ENCODE measurements at regions of chr3 and their contacts with region 1.

Region 1: GRCh38 chr3:150408221-150409102 is at the start of gene TSC22D2:
- DNase-seq: peak; percentile 99
- ATAC-seq: peak; percentile 71
- H3K4me3 Mint-ChIP-seq: peak within 1 kb of the TSS; percentile 94
- H3K27ac Mint-ChIP-seq: peak within 1 kb of the TSS; percentile 99
- H3K4me1 Mint-ChIP-seq: peaks cover 34% of the 10 kb centered on the region
- H3K27me3 Mint-ChIP-seq: no peaks in the 10 kb centered on the region
- CTCF ChIP-seq: no peak
- total RNA-seq, gene TSC22D2: 35.9 and 38.9 TPM in 2 replicates

Region 2: DNA sequence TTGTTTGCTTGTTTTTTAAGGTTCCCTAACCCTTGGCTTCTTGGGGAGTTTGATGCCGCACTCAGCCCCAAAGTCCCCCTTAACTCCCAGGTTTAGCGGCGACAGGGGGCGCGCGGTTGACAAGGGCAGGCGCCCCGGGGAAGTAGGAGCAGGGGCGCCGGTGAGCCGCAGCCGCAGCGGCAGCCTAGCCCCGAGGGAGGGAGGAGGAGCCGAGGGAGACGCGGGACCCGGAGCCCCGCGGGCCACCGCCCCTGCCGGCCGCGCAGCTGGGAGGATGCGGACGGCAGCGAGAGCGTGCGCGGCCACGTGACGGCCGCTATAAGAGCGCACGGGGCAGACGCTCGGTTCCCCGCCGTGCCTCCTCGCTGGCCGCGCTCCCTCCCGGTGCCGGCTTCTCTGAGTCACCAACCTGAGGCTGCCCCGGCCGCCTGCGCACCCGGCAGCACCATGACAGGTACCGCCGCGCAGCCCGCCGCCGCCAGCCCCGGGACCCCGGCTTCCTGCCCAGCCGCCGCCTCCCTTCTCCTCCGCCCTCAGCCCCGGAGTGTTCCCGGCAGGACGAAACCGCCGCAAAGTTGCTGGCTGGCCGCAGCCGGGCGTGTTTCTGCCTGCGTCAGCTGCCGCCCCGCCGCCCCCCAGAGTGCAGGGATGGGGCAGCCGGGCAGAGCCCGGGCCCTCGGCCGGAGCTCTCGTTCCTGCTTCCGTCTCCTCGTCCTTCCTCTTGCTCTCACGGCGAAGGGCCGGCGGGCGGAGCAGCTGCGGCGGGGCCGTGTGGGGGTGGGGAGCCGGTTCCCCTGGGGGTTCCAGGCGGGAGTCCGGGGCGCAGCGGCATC is 1417.1 kb before region 1 on chr3 and contains the start of gene GYG1:
- CTCF ChIA-PET with region 1: no interaction called
- POLR2A ChIA-PET with region 1: interaction called, 3 read pairs
- intact Hi-C with region 1: loop called (anchors 5 kb)
- DNase-seq: peak; percentile 72
- ATAC-seq: peak; percentile 91
- H3K4me3 Mint-ChIP-seq: peak within 1 kb of the TSS; percentile 84
- H3K27ac Mint-ChIP-seq: peak within 1 kb of the TSS; percentile 69
- H3K4me1 Mint-ChIP-seq: peaks cover 21% of the 10 kb centered on the region
- H3K27me3 Mint-ChIP-seq: no peaks in the 10 kb centered on the region
- CTCF ChIP-seq: no peak
- total RNA-seq, gene GYG1: 20.2 and 21.8 TPM in 2 replicates

Region 3: DNA sequence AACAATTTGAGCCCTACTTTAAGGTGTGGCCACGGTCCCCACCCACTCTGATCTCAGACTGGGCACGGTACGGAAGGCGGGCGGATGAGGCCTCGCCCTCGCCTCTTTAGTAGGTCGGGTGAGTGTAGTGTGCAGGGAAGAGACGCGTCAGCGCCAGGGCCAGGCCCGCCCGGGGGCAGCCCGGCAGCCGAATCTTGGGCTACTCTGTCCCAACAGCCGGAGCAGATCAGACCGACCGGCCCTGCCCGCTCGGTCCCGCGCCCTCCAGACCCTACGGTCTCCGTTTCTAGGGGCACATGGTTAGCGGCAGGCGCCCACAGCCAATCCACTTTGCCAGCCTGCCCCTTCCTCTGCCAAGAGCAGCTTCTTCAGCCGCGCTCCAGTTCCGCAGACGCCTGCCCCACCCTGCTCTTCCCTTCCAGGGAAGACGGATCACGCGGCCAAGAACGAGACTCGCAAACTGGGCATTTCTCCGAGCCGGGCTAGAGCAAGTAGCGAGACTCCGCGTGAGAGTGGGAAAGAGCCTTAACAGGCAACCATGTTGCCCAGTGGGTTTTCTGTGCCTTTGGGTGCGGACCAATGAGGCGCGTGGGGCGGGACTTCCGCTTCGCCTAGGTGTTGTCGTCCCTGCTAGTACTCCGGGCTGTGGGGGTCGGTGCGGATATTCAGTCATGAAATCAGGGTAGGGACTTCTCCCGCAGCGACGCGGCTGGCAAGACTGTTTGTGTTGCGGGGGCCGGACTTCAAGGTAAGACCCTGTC is 595.7 kb before region 1 on chr3 and contains the start of gene RNF13:
- CTCF ChIA-PET with region 1: no interaction called
- POLR2A ChIA-PET with region 1: interaction called, 3 read pairs
- intact Hi-C with region 1: loop called (anchors 2 kb)
- DNase-seq: peak; percentile 87
- ATAC-seq: peak; percentile 88
- H3K4me3 Mint-ChIP-seq: peak within 1 kb of the TSS; percentile 99
- H3K27ac Mint-ChIP-seq: peak within 1 kb of the TSS; percentile 100
- H3K4me1 Mint-ChIP-seq: peaks cover 53% of the 10 kb centered on the region
- H3K27me3 Mint-ChIP-seq: peaks cover 3% of the 10 kb centered on the region
- CTCF ChIP-seq: no peak
- total RNA-seq, gene RNF13: 57.6 and 59.6 TPM in 2 replicates

Region 4: DNA sequence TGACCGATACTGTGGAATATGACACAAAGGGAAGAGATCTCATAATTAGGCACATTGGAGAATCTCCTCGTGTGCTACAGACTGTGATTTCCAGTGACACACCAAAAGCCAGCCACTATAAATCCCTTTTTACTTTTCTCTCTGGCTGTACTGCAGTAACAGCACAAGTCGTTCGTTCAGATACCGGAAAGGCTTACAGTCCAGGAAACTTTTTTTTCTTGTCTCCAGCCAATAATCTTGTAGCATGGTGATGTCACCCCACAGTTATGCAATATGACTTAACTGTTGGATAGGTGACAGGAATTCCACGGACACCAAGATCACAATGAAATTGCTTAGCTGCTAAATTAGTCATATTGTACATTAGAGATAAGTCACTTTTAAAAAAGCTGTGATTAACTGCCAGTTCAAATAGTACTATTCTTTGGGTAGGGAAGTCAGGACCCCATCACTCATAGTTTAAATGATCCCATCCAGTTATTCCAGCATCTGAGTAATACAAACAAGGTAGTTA is 36.7 kb before region 1 on chr3:
- CTCF ChIA-PET with region 1: interaction called, 4 read pairs
- POLR2A ChIA-PET with region 1: interaction called, 7 read pairs
- intact Hi-C with region 1: loop called (anchors 5 kb)
- DNase-seq: no peak
- ATAC-seq: no peak
- H3K4me3 Mint-ChIP-seq: no peak overlapping the region
- H3K27ac Mint-ChIP-seq: no peak overlapping the region
- H3K4me1 Mint-ChIP-seq: peaks cover 14% of the 10 kb centered on the region
- H3K27me3 Mint-ChIP-seq: no peaks in the 10 kb centered on the region
- CTCF ChIP-seq: no peak

Region 5: GRCh38 chr3:150421799-150422548 is 13.5 kb after region 1 on chr3:
- CTCF ChIA-PET with region 1: interaction called, 5 read pairs
- POLR2A ChIA-PET with region 1: interaction called, 8 read pairs
- intact Hi-C with region 1: loop called (anchors 1 kb)
- DNase-seq: no peak
- ATAC-seq: no peak
- H3K4me3 Mint-ChIP-seq: no peak overlapping the region
- H3K27ac Mint-ChIP-seq: no peak overlapping the region
- H3K4me1 Mint-ChIP-seq: peaks cover 48% of the 10 kb centered on the region
- H3K27me3 Mint-ChIP-seq: no peaks in the 10 kb centered on the region
- CTCF ChIP-seq: no peak

Region 6: GRCh38 chr3:150546226-150547044 is 138.0 kb after region 1 on chr3 and contains the starts of genes EIF2A and SERP1:
- CTCF ChIA-PET with region 1: no interaction called
- POLR2A ChIA-PET with region 1: interaction called, 41 read pairs
- intact Hi-C with region 1: loop called (anchors 1 kb)
- DNase-seq: peak; percentile 98
- ATAC-seq: peak; percentile 92
- H3K4me3 Mint-ChIP-seq: peak within 1 kb of the TSS; percentile 96
- H3K27ac Mint-ChIP-seq: peak within 1 kb of the TSS; percentile 99
- H3K4me1 Mint-ChIP-seq: peaks cover 50% of the 10 kb centered on the region
- H3K27me3 Mint-ChIP-seq: no peaks in the 10 kb centered on the region
- CTCF ChIP-seq: no peak
- total RNA-seq, gene EIF2A: 105 and 109 TPM in 2 replicates
- total RNA-seq, gene SERP1: 87.2 and 88.2 TPM in 2 replicates

Region 7: GRCh38 chr3:151276687-151277042 is 868.2 kb after region 1 on chr3:
- CTCF ChIA-PET with region 1: no interaction called
- POLR2A ChIA-PET with region 1: interaction called, 5 read pairs
- intact Hi-C with region 1: loop called (anchors 10 kb)
- DNase-seq: peak; percentile 33
- ATAC-seq: peak; percentile 77
- H3K4me3 Mint-ChIP-seq: peak overlapping the region; percentile 75
- H3K27ac Mint-ChIP-seq: peak overlapping the region; percentile 97
- H3K4me1 Mint-ChIP-seq: peaks cover 82% of the 10 kb centered on the region
- H3K27me3 Mint-ChIP-seq: no peaks in the 10 kb centered on the region
- CTCF ChIP-seq: no peak

Measured in activated B cell treated with CpG ODN at 0.5 μM for 24 hours (primary cell).